ENCODE measurements at regions of chr6 and their contacts with region 1.

Region 1: GRCh38 chr6:53718597-53719460 is 53.3 kb upstream of the KLHL31 start:
- DNase-seq: peak; percentile 48
- H3K4me3 ChIP-seq: no peak overlapping the region
- H3K27ac ChIP-seq: no peak overlapping the region
- H3K27me3 ChIP-seq: no peaks in the 10 kb centered on the region
- CTCF ChIP-seq: peak; percentile 83

Region 2: DNA sequence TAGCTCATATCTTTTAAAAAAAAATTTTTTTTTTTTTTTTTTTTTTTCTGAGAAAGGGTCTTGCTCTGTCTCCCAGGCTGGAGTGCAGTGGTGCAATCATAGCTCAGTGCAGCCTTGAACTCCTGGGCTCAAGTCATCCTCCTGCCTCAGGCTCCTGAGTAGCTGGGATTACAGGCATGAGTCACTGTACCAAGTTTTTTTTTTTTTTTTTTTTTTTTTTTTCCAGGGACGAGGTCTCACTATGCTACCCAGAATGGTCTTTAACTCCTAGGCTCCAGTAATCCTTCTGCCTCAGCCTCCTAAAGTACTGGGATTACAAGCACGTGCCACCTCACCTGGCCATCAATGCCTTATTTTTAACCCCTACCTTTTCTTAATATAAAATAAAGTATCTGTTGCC is 201.8 kb before region 1 on chr6:
- CTCF ChIA-PET with region 1: interaction called, 44 read pairs
- POLR2A ChIA-PET with region 1: no interaction called
- DNase-seq: no peak
- H3K4me3 ChIP-seq: no peak overlapping the region
- H3K27ac ChIP-seq: no peak overlapping the region
- H3K27me3 ChIP-seq: no peaks in the 10 kb centered on the region
- CTCF ChIP-seq: no peak

Region 3: GRCh38 chr6:53664623-53665022 is 54.2 kb before region 1 on chr6:
- CTCF ChIA-PET with region 1: interaction called, 10 read pairs
- POLR2A ChIA-PET with region 1: no interaction called
- DNase-seq: no peak
- H3K4me3 ChIP-seq: no peak overlapping the region
- H3K27ac ChIP-seq: no peak overlapping the region
- H3K27me3 ChIP-seq: peaks cover 7% of the 10 kb centered on the region
- CTCF ChIP-seq: no peak

Region 4: DNA sequence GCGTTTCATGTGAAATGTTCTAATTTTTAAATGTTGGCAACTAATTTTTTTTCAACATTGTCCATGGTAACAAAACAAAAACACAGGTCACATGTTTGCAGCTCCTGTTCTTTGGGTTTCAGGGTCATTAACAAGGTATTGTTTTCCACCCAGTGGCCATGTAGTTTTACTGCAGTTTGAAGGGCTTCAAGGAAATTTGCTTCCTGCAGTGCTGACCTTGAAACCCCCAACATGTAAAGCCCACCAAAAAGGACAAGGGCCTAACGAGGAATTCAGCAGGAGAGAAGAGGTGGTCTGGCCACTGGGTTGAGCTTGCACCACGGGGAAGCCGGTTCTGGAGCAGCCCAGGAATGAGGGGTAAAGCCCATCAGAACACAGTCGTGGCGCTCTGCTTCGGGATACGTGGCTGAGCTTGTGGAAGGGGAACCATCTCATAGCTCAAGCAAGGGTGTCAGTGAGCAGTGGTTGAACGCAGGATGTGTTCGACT is 39.3 kb before region 1 on chr6:
- CTCF ChIA-PET with region 1: interaction called, 14 read pairs
- POLR2A ChIA-PET with region 1: no interaction called
- DNase-seq: no peak
- H3K4me3 ChIP-seq: no peak overlapping the region
- H3K27ac ChIP-seq: no peak overlapping the region
- H3K27me3 ChIP-seq: no peaks in the 10 kb centered on the region
- CTCF ChIP-seq: peak; percentile 58

Region 5: DNA sequence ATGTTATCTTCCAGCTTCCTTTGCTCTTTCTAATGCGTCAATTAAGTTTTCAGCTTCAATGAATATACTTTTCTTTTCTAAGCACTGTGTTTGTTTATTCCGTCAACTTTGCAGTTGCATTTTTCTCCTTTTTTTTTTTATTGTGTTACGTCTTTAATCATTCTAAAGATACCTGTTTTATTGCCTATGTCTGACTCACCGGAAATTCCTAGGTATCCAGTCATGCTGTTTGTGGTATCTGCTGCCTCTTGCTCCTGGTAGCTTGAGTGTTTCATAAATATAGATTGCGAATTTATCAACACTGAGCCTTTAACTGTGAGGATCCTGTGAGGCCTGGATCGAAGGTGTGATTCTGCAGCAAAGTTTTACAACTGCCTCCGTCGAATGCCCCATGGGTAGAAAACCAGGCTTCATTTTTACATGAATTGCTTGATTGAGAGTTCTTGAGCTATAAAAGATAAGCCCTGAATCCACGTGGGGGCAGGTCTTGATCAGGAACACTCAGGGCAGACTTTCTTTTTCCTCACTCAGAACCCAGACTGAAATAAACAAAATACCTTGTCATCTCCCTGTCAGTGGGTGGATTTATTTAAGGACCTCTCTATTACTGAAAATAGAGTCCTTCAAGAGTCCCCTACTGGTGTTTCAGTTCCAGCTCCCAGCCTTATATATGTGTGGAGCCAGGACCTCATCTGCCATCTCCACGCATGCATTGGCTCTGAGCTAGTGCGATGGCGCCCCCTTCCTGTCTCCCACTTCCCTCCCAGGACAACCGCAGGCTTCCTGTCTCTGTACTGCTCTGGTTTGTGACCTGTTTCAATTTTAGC is 15.9 kb after region 1 on chr6:
- CTCF ChIA-PET with region 1: interaction called, 116 read pairs
- POLR2A ChIA-PET with region 1: no interaction called
- DNase-seq: peak; percentile 30
- H3K4me3 ChIP-seq: no peak overlapping the region
- H3K27ac ChIP-seq: peak overlapping the region; percentile 54
- H3K27me3 ChIP-seq: no peaks in the 10 kb centered on the region
- CTCF ChIP-seq: peak; percentile 46

Region 6: GRCh38 chr6:53956068-53956711 is 237.4 kb after region 1 on chr6:
- CTCF ChIA-PET with region 1: interaction called, 61 read pairs
- POLR2A ChIA-PET with region 1: no interaction called
- DNase-seq: peak; percentile 32
- H3K4me3 ChIP-seq: no peak overlapping the region
- H3K27ac ChIP-seq: no peak overlapping the region
- H3K27me3 ChIP-seq: no peaks in the 10 kb centered on the region
- CTCF ChIP-seq: peak; percentile 92

Region 7: DNA sequence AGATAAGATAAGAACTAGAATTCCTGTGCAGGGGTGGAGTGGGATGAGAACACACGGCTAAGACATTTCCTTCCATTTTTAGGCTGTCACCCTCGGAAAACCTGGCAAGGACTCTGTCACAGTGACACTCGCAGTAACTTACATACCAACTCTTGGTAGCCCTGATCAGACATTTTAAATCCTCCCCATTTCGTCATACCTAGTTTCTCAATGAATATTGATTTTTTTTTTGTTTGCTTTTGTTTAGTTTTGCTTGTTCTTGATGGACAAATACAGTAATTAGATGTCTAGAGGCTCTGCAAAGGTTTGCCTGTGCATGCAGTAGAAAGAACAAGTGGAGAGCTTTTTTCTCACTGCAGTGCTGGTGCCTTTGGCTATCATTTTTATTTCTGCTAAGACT is 914.8 kb after region 1 on chr6:
- CTCF ChIA-PET with region 1: no interaction called
- POLR2A ChIA-PET with region 1: no interaction called
- DNase-seq: no peak
- H3K4me3 ChIP-seq: no peak overlapping the region
- H3K27ac ChIP-seq: no peak overlapping the region
- H3K27me3 ChIP-seq: no peaks in the 10 kb centered on the region
- CTCF ChIP-seq: no peak

Measured in AG04450 (cell line).